ENCODE measurements at regions of chr19 and their contacts with region 1.

Region 1: DNA sequence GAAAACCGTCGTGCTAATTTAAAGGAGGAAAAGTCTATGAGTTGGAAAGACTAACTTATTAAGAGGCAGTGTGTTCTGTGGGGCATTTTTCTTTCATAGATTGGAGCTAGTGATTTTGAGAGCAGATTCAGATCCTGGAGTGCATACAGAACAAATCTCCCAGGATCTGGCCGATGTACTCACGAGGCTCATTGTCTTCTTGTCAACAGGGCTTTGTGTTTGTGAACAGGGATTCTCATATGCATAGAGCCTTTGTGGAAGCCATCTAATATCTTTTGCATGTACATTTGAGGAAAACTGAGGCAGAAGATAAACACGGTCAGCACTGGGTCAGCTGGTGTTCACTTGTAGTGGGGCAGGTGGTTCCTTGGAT is 482.9 kb upstream of the TSHZ3 start:
- DNase-seq: no peak
- H3K4me3 ChIP-seq: no peak overlapping the region
- H3K27ac ChIP-seq: no peak overlapping the region
- H3K4me1 ChIP-seq: no peaks in the 10 kb centered on the region
- H3K27me3 ChIP-seq: no peaks in the 10 kb centered on the region
- CTCF ChIP-seq: no peak
- POLR2A ChIP-seq: no peak

Region 2: GRCh38 chr19:30464162-30464561 is 1368.0 kb before region 1 on chr19:
- intact Hi-C with region 1: loop called (anchors 5 kb)
- DNase-seq: no peak
- H3K4me3 ChIP-seq: no peak overlapping the region
- H3K27ac ChIP-seq: no peak overlapping the region
- H3K4me1 ChIP-seq: no peaks in the 10 kb centered on the region
- H3K27me3 ChIP-seq: no peaks in the 10 kb centered on the region
- CTCF ChIP-seq: no peak
- POLR2A ChIP-seq: no peak

Region 3: DNA sequence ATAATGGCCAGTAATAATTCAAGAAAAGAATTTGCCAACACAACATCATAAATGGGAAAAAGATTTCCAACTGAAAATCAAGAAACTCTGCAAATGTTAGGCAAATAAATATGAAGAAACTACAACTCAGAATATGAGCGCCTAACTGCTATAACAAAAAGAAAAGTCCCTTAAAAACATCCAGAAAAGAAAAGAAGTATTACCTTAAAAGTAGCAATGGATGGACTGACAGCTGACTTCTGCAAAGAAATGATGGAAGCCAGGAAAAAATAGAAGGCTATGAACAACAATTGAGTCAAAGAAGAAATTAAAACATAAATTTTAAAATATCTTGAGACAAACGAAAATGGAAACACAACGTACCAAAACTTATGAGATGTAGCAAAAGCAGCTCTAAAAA is 31.0 kb after region 1 on chr19:
- intact Hi-C with region 1: no loop called
- DNase-seq: no peak
- H3K4me3 ChIP-seq: no peak overlapping the region
- H3K27ac ChIP-seq: no peak overlapping the region
- H3K4me1 ChIP-seq: no peaks in the 10 kb centered on the region
- H3K27me3 ChIP-seq: no peaks in the 10 kb centered on the region
- CTCF ChIP-seq: no peak
- POLR2A ChIP-seq: no peak

Region 4: DNA sequence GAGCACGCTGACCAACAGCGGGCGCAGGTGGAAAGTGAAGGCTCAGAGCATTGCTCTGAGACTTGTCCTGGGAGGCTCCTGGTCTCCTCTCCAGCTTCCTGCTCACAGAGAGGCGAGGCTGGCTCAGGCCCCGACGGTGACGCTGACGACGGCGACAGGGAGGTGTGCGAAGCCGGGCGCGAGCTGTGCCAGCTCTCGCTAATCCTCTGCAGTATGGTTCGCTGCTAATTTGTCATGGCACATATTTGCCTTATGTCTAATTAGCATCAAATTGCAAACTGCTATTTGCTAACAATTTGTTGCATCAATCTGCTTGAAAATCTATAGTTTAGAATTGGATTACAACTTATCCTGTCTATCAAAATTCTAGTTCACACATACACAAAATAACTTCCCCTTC is 43.4 kb after region 1 on chr19:
- intact Hi-C with region 1: no loop called
- DNase-seq: no peak
- H3K4me3 ChIP-seq: no peak overlapping the region
- H3K27ac ChIP-seq: no peak overlapping the region
- H3K4me1 ChIP-seq: no peaks in the 10 kb centered on the region
- H3K27me3 ChIP-seq: no peaks in the 10 kb centered on the region
- CTCF ChIP-seq: no peak
- POLR2A ChIP-seq: no peak

Measured in breast epithelium (tissue), 4 donors.